CD8-positive, alpha-beta T cell (primary cell): ENCODE measurements at regions of chr9 and their contacts with region 1.

Region 1: GRCh38 chr9:127770905-127771569 is 7.4 kb downstream of the SH2D3C start:
- DNase-seq: peak; percentile 81 to 96 (median 93)
- ATAC-seq: peak; percentile 79
- H3K4me3 ChIP-seq: peak overlapping the region; percentile 55 to 65
- H3K4me3 Mint-ChIP-seq: peak overlapping the region; percentile 88
- H3K27ac ChIP-seq: peak overlapping the region; percentile 58 to 83
- H3K27ac Mint-ChIP-seq: peak overlapping the region; percentile 96
- H3K4me1 ChIP-seq: peaks cover 75% of the 10 kb centered on the region
- H3K4me1 Mint-ChIP-seq: peaks cover 73% of the 10 kb centered on the region
- H3K27me3 ChIP-seq: no peaks in the 10 kb centered on the region
- H3K27me3 Mint-ChIP-seq: no peaks in the 10 kb centered on the region
- CTCF ChIP-seq: no peak

Region 2: DNA sequence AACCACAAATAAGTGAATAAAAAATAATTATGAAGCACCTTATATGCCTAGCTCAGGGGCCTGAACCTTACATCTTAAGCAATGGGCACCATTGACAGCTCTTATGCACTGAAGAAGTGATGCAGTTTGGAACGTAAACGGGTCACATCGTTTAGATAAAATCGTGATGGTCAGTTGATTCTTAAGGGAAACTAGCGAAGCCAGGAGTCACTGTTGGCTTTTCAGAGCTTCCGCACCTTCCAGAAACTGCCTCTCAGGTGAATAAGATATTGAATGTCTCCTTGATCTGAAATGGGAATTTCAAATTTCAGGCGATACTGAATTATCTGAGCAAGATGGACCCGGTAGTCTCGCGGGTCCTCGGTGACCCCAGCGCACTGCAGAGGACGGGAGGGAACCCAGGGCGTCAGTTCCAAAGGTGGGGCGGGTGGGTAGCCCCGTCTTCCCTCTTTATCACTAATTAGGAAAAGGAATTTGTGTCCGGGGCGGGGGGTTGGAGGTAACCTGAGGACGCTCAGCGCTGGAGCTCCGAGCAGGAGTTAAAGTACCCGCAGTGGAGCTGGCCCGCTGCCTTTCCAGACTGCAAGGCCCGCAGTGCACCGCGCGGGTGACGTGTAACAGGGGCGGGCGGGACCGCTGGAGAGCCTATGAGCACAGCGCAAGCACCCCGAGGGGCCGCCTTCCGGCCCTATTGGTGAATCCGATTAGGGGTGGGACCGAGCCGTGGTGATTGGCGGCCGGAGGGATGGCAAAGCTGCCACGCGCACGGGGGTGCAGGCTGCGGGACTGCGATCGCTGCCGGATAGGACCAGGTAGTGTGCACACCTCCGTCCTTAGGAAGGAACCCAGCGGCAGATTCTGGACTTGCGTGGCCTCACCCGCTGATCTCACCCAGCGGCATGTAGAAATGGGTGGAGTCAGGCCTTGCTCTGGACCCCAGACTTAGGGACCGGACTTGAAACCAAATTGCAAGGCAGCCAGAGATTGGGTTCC is 526.1 kb before region 1 on chr9:
- CTCF ChIA-PET with region 1: no interaction called
- POLR2A ChIA-PET with region 1: no interaction called
- intact Hi-C with region 1: loop called in 1 of 2 experiments (anchors 2 kb)
- DNase-seq: peak; percentile 88 to 96 (median 94)
- ATAC-seq: peak; percentile 100
- H3K4me3 ChIP-seq: peak overlapping the region; percentile 57 to 76
- H3K4me3 Mint-ChIP-seq: peak overlapping the region; percentile 86
- H3K27ac ChIP-seq: peak overlapping the region in 1 of 2 experiments; percentile 12
- H3K27ac Mint-ChIP-seq: no peak overlapping the region
- H3K4me1 ChIP-seq: peaks cover 6% of the 10 kb centered on the region
- H3K4me1 Mint-ChIP-seq: peaks cover 15% of the 10 kb centered on the region
- H3K27me3 ChIP-seq: no peaks in the 10 kb centered on the region
- H3K27me3 Mint-ChIP-seq: peaks cover 7% of the 10 kb centered on the region
- CTCF ChIP-seq: no peak

Region 3: DNA sequence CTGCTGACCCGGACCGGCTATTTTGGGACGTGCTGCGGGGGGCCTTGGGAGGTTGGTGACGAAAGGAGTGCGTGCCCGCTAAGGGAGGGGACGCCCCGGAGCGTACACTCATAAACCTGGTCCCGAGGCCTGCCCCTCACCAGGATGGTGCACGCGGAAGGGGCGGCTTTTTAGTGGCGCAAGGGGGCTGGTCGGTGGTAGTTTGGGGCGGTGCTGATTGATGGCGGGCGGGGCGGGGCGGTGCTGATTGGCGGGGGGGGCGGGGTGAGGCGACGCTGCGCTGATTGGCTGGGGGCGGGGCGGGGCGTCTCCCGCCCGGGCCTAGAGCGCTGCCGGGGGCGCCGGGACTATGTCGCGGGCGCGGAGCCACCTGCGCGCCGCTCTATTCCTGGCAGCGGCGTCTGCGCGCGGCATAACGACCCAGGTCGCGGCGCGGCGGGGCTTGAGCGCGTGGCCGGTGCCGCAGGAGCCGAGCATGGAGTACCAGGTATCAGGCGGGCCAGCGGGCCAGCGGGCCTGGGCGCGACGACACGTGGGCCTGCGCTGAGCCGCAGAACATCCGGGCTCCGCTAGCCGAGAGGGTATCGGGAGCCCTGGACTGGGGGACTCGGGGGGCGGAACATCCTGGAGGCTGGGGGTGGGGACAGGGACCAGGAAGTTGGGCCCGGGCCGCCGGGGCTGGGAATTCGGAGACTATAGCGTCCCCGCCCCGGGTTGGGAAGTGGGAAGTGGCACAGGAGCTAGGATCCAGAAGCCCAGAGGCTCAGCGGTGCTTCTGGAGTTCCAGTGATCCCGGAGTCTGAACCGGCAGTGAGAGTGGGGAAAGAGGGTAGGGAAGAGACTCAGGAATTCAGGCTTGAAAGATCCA is 31.8 kb after region 1 on chr9 and contains the start of gene FPGS:
- CTCF ChIA-PET with region 1: no interaction called
- POLR2A ChIA-PET with region 1: no interaction called
- intact Hi-C with region 1: loop called (anchors 1 kb)
- DNase-seq: peak; percentile 57 to 92 (median 81)
- ATAC-seq: peak; percentile 87
- H3K4me3 ChIP-seq: peak within 1 kb of the TSS; percentile 95 to 98
- H3K4me3 Mint-ChIP-seq: peak within 1 kb of the TSS; percentile 92
- H3K27ac ChIP-seq: peak within 1 kb of the TSS; percentile 89
- H3K27ac Mint-ChIP-seq: peak within 1 kb of the TSS; percentile 87
- H3K4me1 ChIP-seq: peaks cover 21% of the 10 kb centered on the region
- H3K4me1 Mint-ChIP-seq: peaks cover 38% of the 10 kb centered on the region
- H3K27me3 ChIP-seq: no peaks in the 10 kb centered on the region
- H3K27me3 Mint-ChIP-seq: no peaks in the 10 kb centered on the region
- CTCF ChIP-seq: no peak
- total RNA-seq, gene FPGS: 91.9 to 95.3 TPM